ENCODE measurements at regions of chr4 and their contacts with region 1.

Region 1: DNA sequence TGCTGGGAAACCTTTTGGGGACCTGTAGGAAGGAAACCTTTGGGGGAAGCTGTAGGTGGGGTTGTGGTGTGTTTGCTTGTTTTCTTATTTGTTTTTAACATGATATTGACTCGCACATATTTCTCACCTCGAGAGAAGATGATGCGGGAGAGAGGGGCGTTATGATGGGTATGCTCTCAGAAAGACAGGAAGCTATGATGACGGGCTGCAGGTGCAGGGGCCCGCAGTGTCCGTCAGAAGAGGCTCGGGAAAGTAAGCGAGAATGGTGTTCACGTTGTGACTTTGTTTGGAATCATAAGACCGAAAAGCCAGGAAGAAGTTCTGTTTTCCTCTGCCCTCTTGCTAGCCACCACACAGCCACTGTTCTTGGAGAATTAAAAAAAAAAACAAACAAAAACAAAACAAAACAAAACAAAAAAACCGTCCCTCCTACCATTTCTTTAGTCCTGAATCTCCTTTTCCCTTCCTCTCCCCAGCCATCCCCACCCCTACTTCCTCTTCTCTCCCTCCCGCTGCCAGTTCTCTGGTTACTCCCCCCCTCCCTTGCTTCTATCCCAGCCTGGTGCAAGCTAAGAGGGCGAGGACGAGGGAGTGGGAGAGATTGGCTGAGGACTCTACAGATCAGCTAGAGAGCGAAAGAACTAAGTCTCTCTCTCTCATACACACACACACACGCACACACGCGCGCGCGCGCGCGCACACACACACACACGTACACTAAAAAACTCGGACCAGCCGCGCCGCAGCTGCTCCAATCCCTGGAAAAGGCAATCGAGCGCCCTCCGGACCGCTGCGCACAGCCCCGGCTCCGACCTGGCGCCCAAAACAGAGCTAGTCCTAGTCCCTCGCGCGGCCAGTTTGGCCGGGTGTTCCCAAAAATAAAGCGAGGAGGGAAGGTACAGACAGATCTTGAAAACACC is at the start of gene BMP3:
- DNase-seq: no peak
- ATAC-seq: peak; percentile 40
- H3K4me3 Mint-ChIP-seq: peak within 1 kb of the TSS; percentile 89
- H3K27ac Mint-ChIP-seq: peak within 1 kb of the TSS; percentile 57
- H3K4me1 Mint-ChIP-seq: peaks cover 24% of the 10 kb centered on the region
- H3K27me3 Mint-ChIP-seq: peaks cover 46% of the 10 kb centered on the region
- CTCF ChIP-seq: no peak
- total RNA-seq, gene BMP3: 0.04 and 0.12 TPM in 2 replicates

Region 2: GRCh38 chr4:81007417-81007816 is 22.9 kb before region 1 on chr4:
- CTCF ChIA-PET with region 1: no interaction called
- POLR2A ChIA-PET with region 1: no interaction called
- intact Hi-C with region 1: loop called (anchors 2 kb)
- DNase-seq: no peak
- ATAC-seq: no peak
- H3K4me3 Mint-ChIP-seq: no peak overlapping the region
- H3K27ac Mint-ChIP-seq: no peak overlapping the region
- H3K4me1 Mint-ChIP-seq: peaks cover 18% of the 10 kb centered on the region
- H3K27me3 Mint-ChIP-seq: no peaks in the 10 kb centered on the region
- CTCF ChIP-seq: no peak